Activated naive CD4-positive, alpha-beta T cell treated with anti-CD3 and anti-CD28 coated beads for 36 hours (primary cell): ENCODE measurements at regions of chr11 and their contacts with region 1.

Region 1: GRCh38 chr11:87252869-87253268 is 215.1 kb downstream of the TMEM135 start:
- DNase-seq: no peak
- H3K4me3 Mint-ChIP-seq: no peak overlapping the region
- H3K27ac Mint-ChIP-seq: peak overlapping the region; percentile 14
- H3K4me1 Mint-ChIP-seq: peaks cover 29% of the 10 kb centered on the region
- H3K27me3 Mint-ChIP-seq: no peaks in the 10 kb centered on the region

Region 2: DNA sequence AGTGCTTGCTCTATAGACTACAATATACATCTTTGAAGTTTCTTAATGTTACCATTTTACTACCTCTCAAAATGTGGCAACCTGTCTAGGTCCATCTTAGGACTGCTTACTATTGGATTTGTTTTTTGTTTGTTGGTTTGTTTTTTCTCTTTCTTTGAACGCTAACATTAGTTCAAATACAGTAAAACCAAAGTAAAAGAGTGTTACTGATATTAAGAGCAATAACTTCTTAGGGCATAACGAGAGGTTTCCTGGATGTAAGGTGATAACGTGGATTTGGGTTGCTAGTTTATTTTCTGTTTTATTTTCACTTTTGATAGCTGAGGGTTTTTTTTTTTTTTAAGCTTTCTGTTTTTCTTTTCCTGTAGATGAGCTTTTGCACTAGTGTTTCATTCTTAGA is 171.5 kb before region 1 on chr11:
- CTCF ChIA-PET with region 1: no interaction called
- intact Hi-C with region 1: loop called (anchors 1 kb)
- DNase-seq: no peak
- H3K4me3 Mint-ChIP-seq: peak overlapping the region; percentile 68
- H3K27ac Mint-ChIP-seq: peak overlapping the region; percentile 65
- H3K4me1 Mint-ChIP-seq: peaks cover 19% of the 10 kb centered on the region
- H3K27me3 Mint-ChIP-seq: no peaks in the 10 kb centered on the region

Region 3: DNA sequence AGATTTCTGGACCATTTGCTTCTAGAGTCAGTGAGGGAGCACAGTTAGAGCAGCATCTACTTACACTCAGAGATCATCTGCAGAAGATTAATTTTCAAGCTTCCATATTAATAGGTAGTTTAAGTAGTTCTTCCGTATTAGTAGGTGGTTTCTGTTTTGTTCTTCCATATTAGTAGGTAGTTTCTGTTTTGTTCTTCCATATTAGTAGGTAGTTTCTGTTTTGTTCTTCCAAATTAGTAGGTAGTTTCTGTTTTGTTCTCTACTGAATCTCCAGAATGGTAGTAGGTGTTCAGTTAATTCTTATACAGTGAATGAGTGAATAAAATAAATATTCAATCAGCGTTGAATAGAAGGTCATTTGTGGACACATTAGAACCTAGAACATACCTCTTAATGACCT is 39.4 kb before region 1 on chr11:
- CTCF ChIA-PET with region 1: no interaction called
- intact Hi-C with region 1: loop called (anchors 2 kb)
- DNase-seq: no peak
- H3K4me3 Mint-ChIP-seq: no peak overlapping the region
- H3K27ac Mint-ChIP-seq: no peak overlapping the region
- H3K4me1 Mint-ChIP-seq: peaks cover 8% of the 10 kb centered on the region
- H3K27me3 Mint-ChIP-seq: no peaks in the 10 kb centered on the region

Region 4: GRCh38 chr11:87236368-87236767 is 16.5 kb before region 1 on chr11:
- CTCF ChIA-PET with region 1: no interaction called
- intact Hi-C with region 1: no loop called
- DNase-seq: no peak
- H3K4me3 Mint-ChIP-seq: no peak overlapping the region
- H3K27ac Mint-ChIP-seq: no peak overlapping the region
- H3K4me1 Mint-ChIP-seq: no peaks in the 10 kb centered on the region
- H3K27me3 Mint-ChIP-seq: no peaks in the 10 kb centered on the region